HepG2 (cell line): ENCODE measurements at regions of chr18 and their contacts with region 1.

Region 1: GRCh38 chr18:23553887-23554286 is 32.4 kb downstream of the NPC1 start:
- DNase-seq: no peak
- ATAC-seq: no peak
- H3K4me3 ChIP-seq: no peak overlapping the region
- H3K27ac ChIP-seq: no peak overlapping the region
- H3K4me1 ChIP-seq: peaks cover 69% of the 10 kb centered on the region
- H3K27me3 ChIP-seq: no peaks in the 10 kb centered on the region
- CTCF ChIP-seq: no peak
- EP300 ChIP-seq: no peak
- POLR2A ChIP-seq: no peak
- RAD21 ChIP-seq: no peak

Region 2: DNA sequence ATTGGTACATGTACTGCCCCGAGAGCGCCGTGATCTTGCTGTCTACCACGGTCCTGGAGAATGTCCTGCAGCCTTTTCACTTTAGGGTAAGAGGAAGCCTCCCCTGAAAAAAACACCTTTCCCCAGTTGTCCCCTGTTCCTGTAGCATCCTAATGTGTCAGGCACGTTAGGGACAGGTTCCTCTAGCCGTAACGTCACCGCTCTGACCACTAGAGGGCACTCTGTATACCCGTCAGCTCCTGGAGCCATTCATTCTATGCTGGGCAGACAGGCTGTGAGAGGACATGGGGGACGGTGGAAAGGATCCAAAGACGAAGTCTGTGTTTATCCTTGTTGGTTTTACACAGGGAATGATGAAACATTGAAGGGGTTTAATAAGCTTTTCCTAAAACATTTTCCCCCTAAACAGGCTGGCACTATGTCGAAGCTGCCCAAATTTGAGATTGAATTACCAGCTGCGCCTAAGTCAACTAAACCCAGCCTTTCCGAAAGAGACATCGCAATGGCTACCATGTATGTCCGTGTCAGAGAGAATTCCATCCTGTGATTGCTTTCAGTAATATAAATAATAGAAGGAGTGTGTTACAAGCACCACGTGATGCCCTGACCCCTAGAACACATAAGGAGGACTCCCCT is 37.9 kb before region 1 on chr18:
- CTCF ChIA-PET with region 1: no interaction called
- POLR2A ChIA-PET with region 1: no interaction called
- in situ Hi-C with region 1: no loop called
- intact Hi-C with region 1: loop called (anchors 5 kb)
- DNase-seq: peak; percentile 76
- ATAC-seq: peak; percentile 99
- H3K4me3 ChIP-seq: no peak overlapping the region
- H3K27ac ChIP-seq: peak overlapping the region; percentile 17
- H3K4me1 ChIP-seq: peaks cover 5% of the 10 kb centered on the region; the same call in 1 of the 2 replicates
- H3K27me3 ChIP-seq: no peaks in the 10 kb centered on the region
- CTCF ChIP-seq: peak; percentile 96
- EP300 ChIP-seq: no peak
- POLR2A ChIP-seq: no peak
- RAD21 ChIP-seq: peak; percentile 72

Region 3: GRCh38 chr18:23536231-23536630 is 17.7 kb before region 1 on chr18:
- CTCF ChIA-PET with region 1: no interaction called
- POLR2A ChIA-PET with region 1: no interaction called
- in situ Hi-C with region 1: no loop called
- intact Hi-C with region 1: no loop called
- DNase-seq: no peak
- ATAC-seq: no peak
- H3K4me3 ChIP-seq: no peak overlapping the region
- H3K27ac ChIP-seq: no peak overlapping the region
- H3K4me1 ChIP-seq: peaks cover 15% of the 10 kb centered on the region
- H3K27me3 ChIP-seq: no peaks in the 10 kb centered on the region
- CTCF ChIP-seq: no peak
- EP300 ChIP-seq: no peak
- POLR2A ChIP-seq: no peak
- RAD21 ChIP-seq: no peak

Region 4: GRCh38 chr18:23568281-23569138 is 14.6 kb after region 1 on chr18:
- CTCF ChIA-PET with region 1: no interaction called
- POLR2A ChIA-PET with region 1: interaction called, 16 read pairs
- in situ Hi-C with region 1: no loop called
- intact Hi-C with region 1: loop called (anchors 1 kb)
- DNase-seq: no peak
- ATAC-seq: no peak
- H3K4me3 ChIP-seq: no peak overlapping the region
- H3K27ac ChIP-seq: peak overlapping the region; percentile 72
- H3K4me1 ChIP-seq: peaks cover 60% of the 10 kb centered on the region
- H3K27me3 ChIP-seq: no peaks in the 10 kb centered on the region
- CTCF ChIP-seq: no peak
- EP300 ChIP-seq: no peak
- POLR2A ChIP-seq: no peak
- RAD21 ChIP-seq: no peak

Region 5: GRCh38 chr18:23573626-23574431 is 19.9 kb after region 1 on chr18:
- CTCF ChIA-PET with region 1: no interaction called
- POLR2A ChIA-PET with region 1: interaction called, 16 read pairs
- in situ Hi-C with region 1: no loop called
- intact Hi-C with region 1: loop called (anchors 1 kb)
- DNase-seq: no peak
- ATAC-seq: no peak
- H3K4me3 ChIP-seq: no peak overlapping the region
- H3K27ac ChIP-seq: peak overlapping the region; percentile 74
- H3K4me1 ChIP-seq: peaks cover 84% of the 10 kb centered on the region
- H3K27me3 ChIP-seq: no peaks in the 10 kb centered on the region
- CTCF ChIP-seq: no peak
- EP300 ChIP-seq: no peak
- POLR2A ChIP-seq: no peak
- RAD21 ChIP-seq: no peak

Region 6: GRCh38 chr18:23586249-23587196 is 32.6 kb after region 1 on chr18 and contains the start of gene NPC1:
- CTCF ChIA-PET with region 1: no interaction called
- POLR2A ChIA-PET with region 1: interaction called, 25 read pairs
- in situ Hi-C with region 1: loop called (anchors 5 kb)
- intact Hi-C with region 1: loop called (anchors 1 kb)
- DNase-seq: peak; percentile 94
- ATAC-seq: peak; percentile 92
- H3K4me3 ChIP-seq: peak within 1 kb of the TSS; percentile 85 to 99 (median 96)
- H3K27ac ChIP-seq: peak within 1 kb of the TSS; percentile 100
- H3K4me1 ChIP-seq: peaks cover 58% of the 10 kb centered on the region
- H3K27me3 ChIP-seq: peaks cover 0 to 5% of the 10 kb centered on the region in 2 experiments; a peak in 1 of 5 replicates
- CTCF ChIP-seq: peak; percentile 80
- EP300 ChIP-seq: no peak
- POLR2A ChIP-seq: peak; percentile 72 to 73
- RAD21 ChIP-seq: peak; percentile 81
- total RNA-seq, gene NPC1: 28.6 and 46.5 TPM in 2 replicates

Region 7: GRCh38 chr18:23605938-23606337 is 52.1 kb after region 1 on chr18:
- CTCF ChIA-PET with region 1: no interaction called
- POLR2A ChIA-PET with region 1: no interaction called
- in situ Hi-C with region 1: no loop called
- intact Hi-C with region 1: no loop called
- DNase-seq: peak; percentile 61
- ATAC-seq: peak; percentile 62
- H3K4me3 ChIP-seq: no peak overlapping the region
- H3K27ac ChIP-seq: no peak overlapping the region
- H3K4me1 ChIP-seq: peaks cover 29% of the 10 kb centered on the region
- H3K27me3 ChIP-seq: no peaks in the 10 kb centered on the region
- CTCF ChIP-seq: no peak
- EP300 ChIP-seq: no peak
- POLR2A ChIP-seq: no peak
- RAD21 ChIP-seq: no peak

Region 8: GRCh38 chr18:23824240-23824639 is 270.4 kb after region 1 on chr18:
- CTCF ChIA-PET with region 1: no interaction called
- POLR2A ChIA-PET with region 1: no interaction called
- in situ Hi-C with region 1: no loop called
- intact Hi-C with region 1: no loop called
- DNase-seq: no peak
- ATAC-seq: no peak
- H3K4me3 ChIP-seq: no peak overlapping the region
- H3K27ac ChIP-seq: no peak overlapping the region
- H3K4me1 ChIP-seq: peaks cover 16% of the 10 kb centered on the region
- H3K27me3 ChIP-seq: 0 out of 5 replicates have a peak, but pooled peaks cover 0 to 2% of the 10 kb centered on the region in 2 experiments
- CTCF ChIP-seq: peak; percentile 30
- EP300 ChIP-seq: no peak
- POLR2A ChIP-seq: no peak
- RAD21 ChIP-seq: no peak